Ovary (tissue), 10 donors: ENCODE measurements at regions of chr18 and their contacts with region 1.

Region 1: DNA sequence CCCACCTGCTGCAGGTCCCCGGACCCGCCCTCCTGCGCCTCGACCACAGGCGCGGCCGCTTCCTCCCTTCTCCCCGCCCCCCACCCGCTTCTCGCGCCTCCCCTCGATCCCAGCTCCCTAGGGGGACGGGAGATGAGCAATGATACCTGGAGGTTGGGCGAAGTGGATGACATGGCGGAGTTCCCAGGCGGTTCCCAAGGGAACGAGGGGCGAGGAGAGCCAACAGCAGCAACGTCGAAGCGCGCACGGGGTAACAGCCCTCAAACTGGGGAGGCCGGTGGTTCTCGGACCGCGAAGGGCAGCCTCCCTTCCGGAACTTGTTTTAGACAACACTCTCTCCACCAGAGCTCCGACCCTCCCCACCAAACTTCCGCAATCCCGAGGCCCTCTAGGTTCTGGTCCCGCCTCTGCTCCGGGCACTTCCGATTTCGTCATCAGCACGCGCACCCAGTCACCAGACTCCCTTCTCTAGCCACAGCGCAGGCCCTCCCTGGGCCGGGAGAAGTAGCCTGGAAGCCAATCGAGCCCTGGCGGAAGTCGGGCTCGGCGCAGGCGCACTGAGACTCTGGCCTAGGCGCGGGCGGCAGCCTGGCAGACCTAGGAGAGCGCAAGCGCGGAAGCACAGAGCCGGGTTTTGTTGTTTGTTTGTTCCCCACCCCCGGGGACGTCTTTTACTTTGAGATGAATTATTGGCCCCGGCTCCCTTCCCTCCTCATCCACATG is at the start of gene VPS4B:
- DNase-seq: peak; percentile 99 to 100 (median 99)
- H3K4me3 ChIP-seq: peak within 1 kb of the TSS; percentile 94
- H3K27ac ChIP-seq: peak within 1 kb of the TSS; percentile 82 to 96
- H3K4me1 ChIP-seq: no peaks in the 10 kb centered on the region
- H3K27me3 ChIP-seq: no peaks in the 10 kb centered on the region
- CTCF ChIP-seq: peak in 1 of 3 donors; percentile 35
- EP300 ChIP-seq: no peak
- POLR2A ChIP-seq: peak; percentile 74
- total RNA-seq, gene VPS4B: 20.7 to 43.4 (median 36.2) TPM

Region 2: DNA sequence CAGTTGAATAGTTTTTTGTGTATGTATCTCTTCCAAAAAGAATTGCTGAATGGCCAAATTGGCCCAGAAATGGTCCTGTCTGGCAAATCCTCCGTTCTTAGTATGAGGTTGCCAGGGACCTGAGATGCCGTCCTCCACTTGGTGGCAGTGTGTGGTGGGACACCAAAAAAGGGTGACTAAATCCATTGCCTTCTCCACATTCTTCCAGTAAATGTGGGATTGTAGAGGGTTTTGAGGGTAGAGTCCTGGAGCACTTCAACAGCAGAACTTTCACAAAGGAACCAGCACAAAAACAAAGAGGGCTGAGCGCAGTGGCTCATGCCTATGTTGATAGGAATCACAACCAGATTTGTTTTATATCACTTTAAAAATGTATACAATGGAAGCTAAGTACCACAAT is 302.6 kb before region 1 on chr18:
- intact Hi-C with region 1: loop called in 1 of 4 experiments (anchors 10 kb)
- DNase-seq: peak in 1 of 5 donors; percentile 33
- H3K4me3 ChIP-seq: no peak overlapping the region
- H3K27ac ChIP-seq: no peak overlapping the region
- H3K4me1 ChIP-seq: no peaks in the 10 kb centered on the region
- H3K27me3 ChIP-seq: no peaks in the 10 kb centered on the region
- CTCF ChIP-seq: peak in 2 of 3 donors; percentile 17 to 37
- EP300 ChIP-seq: no peak
- POLR2A ChIP-seq: no peak

Region 3: DNA sequence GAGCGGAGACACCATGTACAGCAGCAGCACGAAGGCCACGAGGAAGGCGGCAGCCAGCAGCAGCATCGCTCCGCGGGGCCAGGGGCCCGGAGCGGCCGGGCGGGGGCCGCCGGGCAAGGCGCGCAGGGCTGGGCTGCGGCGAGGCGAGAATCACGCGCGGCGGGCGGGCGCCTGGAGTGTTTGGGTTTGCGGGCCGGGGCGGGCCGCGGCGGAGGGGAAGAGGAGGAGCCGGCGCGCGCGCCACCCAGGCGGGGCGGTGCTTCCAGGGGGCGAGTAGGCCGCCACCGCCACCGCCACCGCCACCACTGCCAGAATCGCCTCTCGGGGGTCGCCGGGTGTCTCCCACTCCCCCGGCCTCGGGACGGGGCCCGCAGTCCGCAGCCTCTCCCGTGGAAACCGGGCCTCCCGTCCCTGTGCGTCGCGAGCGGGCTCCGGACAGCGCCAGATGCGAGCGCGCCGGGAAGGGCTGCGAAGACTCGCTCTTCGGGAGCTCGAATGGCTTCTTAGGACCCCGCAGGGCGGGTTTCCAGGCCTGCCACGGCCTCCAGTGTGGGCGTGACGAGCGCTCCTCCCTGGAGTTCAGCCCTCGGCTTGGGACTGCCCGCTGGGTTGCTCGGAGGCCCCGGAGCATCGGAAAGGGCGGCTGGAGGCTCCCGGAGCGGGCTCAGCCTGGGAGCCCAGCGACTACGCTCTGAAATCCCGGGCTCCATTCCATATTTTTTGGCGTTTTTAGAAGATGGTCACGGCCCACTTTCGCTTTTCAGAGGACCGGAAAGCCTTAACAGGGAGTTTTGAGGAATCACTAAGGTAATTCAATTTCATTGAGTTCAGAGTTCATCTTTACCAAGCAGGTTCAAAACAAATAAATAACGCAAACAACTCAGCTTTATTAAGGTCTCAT is 54.9 kb before region 1 on chr18 and contains the start of gene KDSR:
- intact Hi-C with region 1: loop called in 2 of 4 experiments (anchors 2 to 10 kb)
- DNase-seq: peak; percentile 95 to 98 (median 96)
- H3K4me3 ChIP-seq: peak within 1 kb of the TSS; percentile 100
- H3K27ac ChIP-seq: peak within 1 kb of the TSS; percentile 93 to 97
- H3K4me1 ChIP-seq: peaks cover 2% of the 10 kb centered on the region
- H3K27me3 ChIP-seq: no peaks in the 10 kb centered on the region
- CTCF ChIP-seq: no peak
- EP300 ChIP-seq: no peak
- POLR2A ChIP-seq: peak; percentile 88
- total RNA-seq, gene KDSR: 25.8 to 70.1 (median 62.6) TPM

Region 4: DNA sequence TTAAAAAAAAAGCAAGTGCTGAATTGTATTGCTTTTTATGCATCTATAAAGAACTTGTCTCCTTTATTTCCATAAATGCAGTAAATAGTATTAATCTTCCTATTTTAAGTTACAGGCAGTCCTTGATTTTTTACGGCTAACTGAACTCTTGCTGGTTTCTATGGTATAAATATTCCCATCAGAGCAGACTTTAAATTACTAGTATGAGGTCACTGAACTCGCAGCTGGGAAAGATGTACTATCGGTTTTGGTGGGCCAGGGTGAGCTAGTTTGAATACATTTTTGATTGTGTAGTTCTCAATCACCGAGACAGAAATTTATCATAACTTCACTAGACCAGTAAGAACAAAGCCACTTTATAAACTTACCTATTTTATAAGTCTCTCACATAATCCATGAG is 34.4 kb before region 1 on chr18:
- intact Hi-C with region 1: no loop called
- DNase-seq: no peak
- H3K4me3 ChIP-seq: no peak overlapping the region
- H3K27ac ChIP-seq: no peak overlapping the region
- H3K4me1 ChIP-seq: no peaks in the 10 kb centered on the region
- H3K27me3 ChIP-seq: no peaks in the 10 kb centered on the region
- CTCF ChIP-seq: no peak
- EP300 ChIP-seq: no peak
- POLR2A ChIP-seq: no peak

Region 5: GRCh38 chr18:63476666-63477065 is 54.4 kb after region 1 on chr18 and contains the start of gene SERPINB5:
- intact Hi-C with region 1: no loop called
- DNase-seq: no peak
- H3K4me3 ChIP-seq: no peak within 1 kb of the TSS
- H3K27ac ChIP-seq: no peak within 1 kb of the TSS
- H3K4me1 ChIP-seq: no peaks in the 10 kb centered on the region
- H3K27me3 ChIP-seq: no peaks in the 10 kb centered on the region
- CTCF ChIP-seq: no peak
- EP300 ChIP-seq: no peak
- POLR2A ChIP-seq: no peak
- total RNA-seq, gene SERPINB5: 0.23 to 0.31 TPM in 2 of 7 donors, not detected in the others

Region 6: DNA sequence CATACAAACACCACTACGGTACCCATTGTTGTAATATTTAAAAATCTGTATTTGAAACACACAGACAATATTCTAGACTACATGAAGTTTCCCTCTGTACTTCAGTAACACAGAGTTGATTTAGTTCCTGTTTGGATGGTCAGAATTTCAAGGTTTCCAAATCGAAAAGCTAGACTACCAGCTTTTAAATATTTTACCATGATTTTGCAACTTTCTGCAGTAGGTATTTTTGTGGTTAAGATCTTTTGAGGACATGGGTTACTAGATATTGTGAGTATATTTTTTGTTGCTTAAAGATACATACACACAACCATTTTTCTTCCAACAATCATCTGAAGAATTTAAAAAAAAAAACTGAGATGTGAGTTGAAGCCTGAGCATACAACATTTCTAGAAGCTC is 65.4 kb after region 1 on chr18:
- intact Hi-C with region 1: no loop called
- DNase-seq: no peak
- H3K4me3 ChIP-seq: no peak overlapping the region
- H3K27ac ChIP-seq: no peak overlapping the region
- H3K4me1 ChIP-seq: peaks cover 2% of the 10 kb centered on the region
- H3K27me3 ChIP-seq: no peaks in the 10 kb centered on the region
- CTCF ChIP-seq: no peak
- EP300 ChIP-seq: no peak
- POLR2A ChIP-seq: no peak